AG04449 (cell line): ENCODE measurements at regions of chr9 and their contacts with region 1.

Region 1: GRCh38 chr9:17116400-17116837 is 18.4 kb upstream of the CNTLN start:
- DNase-seq: no peak
- H3K4me3 ChIP-seq: no peak overlapping the region
- CTCF ChIP-seq: peak; percentile 13

Region 2: DNA sequence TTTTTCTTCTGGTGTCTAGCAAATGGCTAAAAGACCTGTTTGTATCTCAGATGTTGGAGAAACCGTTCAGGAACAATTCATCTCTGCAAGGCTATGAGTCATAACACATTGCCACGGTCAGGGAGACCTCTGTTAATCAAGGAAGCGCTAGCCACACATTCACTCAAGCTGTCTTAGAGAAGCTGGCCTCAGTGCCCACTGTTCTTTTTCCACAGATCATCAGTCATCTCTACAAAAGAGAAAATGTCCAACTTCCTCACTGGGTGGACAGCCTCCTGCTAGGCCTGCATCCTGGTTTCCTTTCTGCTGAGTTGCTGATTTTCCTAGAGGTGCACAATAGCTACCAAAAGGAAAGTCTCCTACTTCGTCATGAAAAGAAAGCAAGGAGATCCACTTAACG is 606.4 kb before region 1 on chr9:
- CTCF ChIA-PET with region 1: no interaction called
- POLR2A ChIA-PET with region 1: no interaction called
- DNase-seq: no peak
- H3K4me3 ChIP-seq: no peak overlapping the region
- CTCF ChIP-seq: no peak

Region 3: GRCh38 chr9:17134396-17135294 is 18.2 kb after region 1 on chr9 and contains the start of gene CNTLN:
- CTCF ChIA-PET with region 1: interaction called, 42 read pairs
- POLR2A ChIA-PET with region 1: no interaction called
- DNase-seq: peak; percentile 24
- H3K4me3 ChIP-seq: peak within 1 kb of the TSS; percentile 96
- CTCF ChIP-seq: no peak

Region 4: DNA sequence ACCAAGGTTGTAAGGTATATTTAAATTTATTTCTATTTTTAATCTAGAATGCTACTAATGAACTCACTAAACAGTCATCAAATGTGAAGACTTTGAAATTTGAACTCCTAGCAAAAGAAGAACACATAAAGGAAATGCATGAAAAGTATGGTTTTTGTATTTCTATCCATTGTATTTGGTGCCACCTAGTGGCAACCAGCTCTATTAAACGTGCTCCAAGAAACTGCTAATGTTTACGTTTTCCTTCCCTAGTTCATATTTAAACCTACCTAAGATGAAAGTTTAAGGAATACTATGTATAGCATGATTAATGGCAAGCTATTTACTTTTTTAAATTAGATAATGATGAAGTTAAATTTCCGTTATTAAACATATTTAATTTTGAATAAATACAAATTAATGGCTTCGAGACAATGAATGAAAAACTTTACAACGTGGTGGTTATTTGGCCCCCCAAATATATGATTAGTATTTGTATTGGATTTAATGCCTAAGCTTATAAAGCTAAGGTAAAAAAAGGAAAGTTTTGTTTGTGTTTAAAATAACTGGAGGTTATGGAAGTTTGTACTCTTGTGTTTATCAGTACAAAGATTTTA is 346.5 kb after region 1 on chr9:
- CTCF ChIA-PET with region 1: interaction called, 101 read pairs
- POLR2A ChIA-PET with region 1: no interaction called
- DNase-seq: peak; percentile 16
- H3K4me3 ChIP-seq: no peak overlapping the region
- CTCF ChIP-seq: peak; percentile 45